Activated CD4-positive, alpha-beta memory T cell treated with anti-CD3 and anti-CD28 coated beads for 36 hours (primary cell): ENCODE measurements at regions of chr10 and their contacts with region 1.

Region 1: GRCh38 chr10:73139251-73139650 is 28.6 kb downstream of the ECD start:
- DNase-seq: no peak
- H3K4me3 Mint-ChIP-seq: no peak overlapping the region
- H3K27ac Mint-ChIP-seq: no peak overlapping the region
- H3K4me1 Mint-ChIP-seq: no peaks in the 10 kb centered on the region
- H3K27me3 Mint-ChIP-seq: no peaks in the 10 kb centered on the region

Region 2: DNA sequence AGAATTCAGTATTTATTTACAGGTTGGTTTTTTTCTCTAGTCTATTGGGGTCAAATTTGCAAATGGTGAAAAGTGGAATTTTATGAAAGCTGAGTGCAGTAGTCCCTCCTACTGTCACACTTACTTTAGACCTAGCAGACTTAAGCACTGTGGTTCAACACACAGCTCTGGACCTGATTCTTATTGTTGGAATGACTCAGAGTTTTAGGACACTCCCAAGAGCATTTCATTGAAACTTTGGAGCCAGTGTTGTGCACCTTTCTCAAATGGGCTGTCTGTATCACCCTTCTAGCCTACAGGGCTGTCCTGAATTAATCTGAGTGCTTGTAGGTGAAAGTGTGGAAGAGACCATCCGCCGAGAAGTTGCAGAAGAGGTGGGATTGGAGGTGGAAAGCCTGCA is 12.9 kb before region 1 on chr10:
- CTCF ChIA-PET with region 1: no interaction called
- POLR2A ChIA-PET with region 1: no interaction called
- intact Hi-C with region 1: no loop called
- DNase-seq: no peak
- H3K4me3 Mint-ChIP-seq: no peak overlapping the region
- H3K27ac Mint-ChIP-seq: no peak overlapping the region
- H3K4me1 Mint-ChIP-seq: no peaks in the 10 kb centered on the region
- H3K27me3 Mint-ChIP-seq: no peaks in the 10 kb centered on the region

Region 3: GRCh38 chr10:73159038-73159648 is 19.9 kb after region 1 on chr10:
- CTCF ChIA-PET with region 1: interaction called, 16 read pairs
- POLR2A ChIA-PET with region 1: interaction called, 3 read pairs
- intact Hi-C with region 1: no loop called
- DNase-seq: peak; percentile 69
- H3K4me3 Mint-ChIP-seq: no peak overlapping the region
- H3K27ac Mint-ChIP-seq: no peak overlapping the region
- H3K4me1 Mint-ChIP-seq: peaks cover 36% of the 10 kb centered on the region
- H3K27me3 Mint-ChIP-seq: no peaks in the 10 kb centered on the region